Left cardiac atrium (tissue), 4 donors: ENCODE measurements at regions of chr2 and their contacts with region 1.

Region 1: GRCh38 chr2:138501425-138502283 is at the start of gene SPOPL:
- DNase-seq: peak; percentile 92
- ATAC-seq: peak; percentile 98 to 99
- total RNA-seq, gene SPOPL: 14.8 to 17.3 TPM

Region 2: DNA sequence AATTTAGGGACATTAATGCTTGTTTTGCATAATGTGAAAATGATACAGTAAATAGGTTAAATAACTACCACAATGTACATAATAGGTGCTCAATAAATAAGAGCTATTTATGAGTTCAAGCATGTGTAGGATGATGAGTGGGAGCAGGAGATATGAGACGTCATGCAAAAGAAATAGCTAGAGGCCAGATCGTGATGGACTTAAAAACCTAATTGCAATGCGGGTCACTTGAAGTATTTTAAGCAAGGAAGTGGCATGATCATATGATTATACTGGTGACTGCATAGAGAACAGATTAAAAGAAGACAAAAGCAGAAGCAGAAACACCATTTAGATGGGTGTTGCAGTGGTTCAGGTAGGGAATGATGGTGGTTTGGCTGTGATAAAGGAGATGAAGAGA is 459.3 kb before region 1 on chr2:
- intact Hi-C with region 1: no loop called
- DNase-seq: no peak
- ATAC-seq: no peak

Region 3: DNA sequence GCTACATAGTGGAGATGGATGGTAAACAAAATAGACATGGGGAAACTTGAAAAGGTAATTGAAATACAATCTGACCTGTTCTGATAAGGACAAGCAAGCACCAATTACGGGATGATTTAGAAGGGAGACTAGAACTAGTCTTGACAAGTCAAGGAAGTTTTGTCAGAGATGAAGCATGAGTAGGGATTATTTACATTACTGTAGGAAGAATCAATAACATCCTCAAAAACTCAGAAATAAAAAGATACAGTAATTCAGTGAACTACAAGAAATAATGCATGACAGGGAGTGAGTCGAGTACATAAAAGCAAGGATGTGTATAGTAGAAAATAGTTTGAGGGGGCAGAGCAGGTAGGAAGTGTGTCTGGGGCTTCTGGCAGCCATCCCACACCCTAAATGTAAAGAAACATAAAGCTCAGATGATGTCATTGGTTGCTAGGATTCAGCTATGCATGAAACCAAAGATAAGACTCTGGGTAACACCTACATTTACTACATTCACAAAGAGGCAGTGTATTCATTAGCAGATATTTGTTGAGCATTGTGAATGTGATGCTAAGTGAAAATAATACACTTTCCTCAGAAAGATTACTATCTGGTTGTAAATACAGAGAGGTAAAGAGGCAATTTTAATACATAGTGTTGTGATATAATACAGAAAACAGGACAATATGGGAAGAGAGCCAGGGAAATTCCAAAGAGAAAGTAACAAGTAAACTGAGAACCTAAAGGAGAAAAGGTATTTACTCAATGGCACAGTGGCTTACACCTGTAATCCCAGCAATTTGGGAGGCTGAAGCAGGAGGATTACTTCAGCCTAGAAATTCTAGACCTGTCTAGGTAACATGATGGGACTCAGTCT is 379.3 kb before region 1 on chr2:
- intact Hi-C with region 1: no loop called
- DNase-seq: no peak
- ATAC-seq: no peak

Region 4: DNA sequence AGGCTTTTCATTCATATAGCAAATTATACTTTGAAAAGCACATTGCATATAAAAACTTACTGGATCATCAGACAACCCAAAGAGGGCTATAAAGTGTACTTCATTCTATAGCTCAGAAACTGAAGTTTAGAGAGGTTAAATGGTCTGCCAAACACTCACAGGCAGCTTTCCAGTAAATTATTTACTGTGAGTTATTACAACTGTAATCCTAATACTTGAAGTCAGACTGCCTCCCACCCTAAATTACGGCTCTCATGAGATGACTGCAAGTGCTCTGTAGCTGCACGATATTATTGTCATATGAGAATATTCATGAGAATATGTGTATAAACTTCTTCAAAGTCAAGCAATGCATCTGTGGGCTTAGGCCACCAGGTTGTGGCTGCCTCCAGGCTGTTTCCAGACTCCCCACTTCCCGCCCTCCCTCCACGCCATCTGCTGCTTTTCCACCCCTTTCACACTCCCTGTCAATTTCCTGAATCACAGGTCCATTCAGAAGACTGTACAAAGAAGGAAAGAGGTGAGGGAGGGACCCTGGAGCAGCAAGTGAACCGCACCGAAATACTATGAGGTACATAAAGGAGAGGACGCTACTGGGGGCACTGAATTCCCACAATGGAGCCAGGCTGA is 111.2 kb before region 1 on chr2:
- intact Hi-C with region 1: no loop called
- DNase-seq: no peak
- ATAC-seq: no peak

Region 5: DNA sequence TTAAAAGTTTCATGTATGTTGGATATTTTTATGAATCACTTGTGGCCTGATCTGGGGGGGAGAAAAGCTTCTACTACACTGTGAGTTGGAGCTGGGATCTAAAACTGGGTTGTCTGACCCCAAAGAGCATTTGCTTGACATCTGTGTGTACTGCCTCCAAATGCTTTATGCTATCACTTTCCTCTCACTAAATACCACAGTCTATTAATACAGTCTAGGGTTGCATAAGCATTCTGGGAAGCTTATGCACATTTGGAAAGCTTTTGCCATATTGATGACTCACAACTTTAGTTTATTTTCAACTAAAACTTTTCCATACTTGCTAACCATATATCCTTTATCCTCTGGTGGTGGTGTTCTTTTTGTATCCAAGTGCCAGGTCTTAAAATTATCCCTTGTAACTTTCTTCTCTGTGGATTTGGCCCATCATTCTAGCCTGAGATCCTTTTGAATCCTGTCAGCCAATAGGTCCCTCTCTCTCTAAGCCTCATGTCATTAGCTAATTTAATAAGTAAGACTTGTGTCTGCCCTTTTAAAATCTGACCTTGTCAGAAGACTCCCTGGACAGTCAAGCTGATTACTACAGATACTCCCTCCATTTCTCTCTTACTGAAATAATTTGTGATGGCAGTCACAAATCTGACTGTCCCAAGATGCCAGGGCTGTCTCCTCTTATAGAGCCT is 205.9 kb after region 1 on chr2:
- intact Hi-C with region 1: loop called in 1 of 2 experiments (anchors 5 kb)
- DNase-seq: no peak
- ATAC-seq: peak; percentile 73 to 80